ENCODE measurements at regions of chr2 and their contacts with region 1.

Region 1: DNA sequence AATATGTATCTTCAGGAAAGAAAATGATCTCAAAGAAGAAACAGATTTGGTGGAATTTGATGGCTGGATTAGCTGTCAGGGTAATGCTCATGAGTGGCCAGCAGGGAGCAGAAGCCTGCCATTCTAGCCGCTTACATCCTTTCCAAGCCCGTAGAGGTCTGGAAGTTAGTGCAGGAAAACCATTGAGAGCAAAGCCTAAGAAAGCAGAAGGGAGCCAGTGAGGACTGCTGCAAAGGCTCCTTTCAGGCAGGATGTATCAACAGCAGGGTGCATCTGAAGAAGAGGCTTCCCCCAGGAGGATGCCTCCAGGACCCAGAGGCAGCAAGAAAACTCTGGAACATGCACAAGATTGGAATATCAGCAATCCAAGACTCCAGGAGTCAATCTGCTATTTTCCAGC is 22.9 kb upstream of the LBH start:
- DNase-seq: peak; percentile 46 to 75
- ATAC-seq: peak; percentile 75 to 95 (median 92)
- H3K4me3 ChIP-seq: no peak overlapping the region
- H3K27ac ChIP-seq: peak overlapping the region in 3 of 10 donors; percentile 4 to 45 (median 10)
- H3K4me1 ChIP-seq: peaks cover 2 to 20% (median 8%) of the 10 kb centered on the region in 9 donors
- H3K27me3 ChIP-seq: no peaks in the 10 kb centered on the region
- CTCF ChIP-seq: peak; percentile 83 to 95 (median 91)

Region 2: GRCh38 chr2:30139131-30139870 is 69.2 kb before region 1 on chr2:
- intact Hi-C with region 1: no loop called
- DNase-seq: no peak
- ATAC-seq: no peak
- H3K4me3 ChIP-seq: no peak overlapping the region
- H3K27ac ChIP-seq: no peak overlapping the region
- H3K4me1 ChIP-seq: no peaks in the 10 kb centered on the region
- H3K27me3 ChIP-seq: peaks cover 0 to 11% (median 0%) of the 10 kb centered on the region in 7 donors
- CTCF ChIP-seq: no peak

Region 3: GRCh38 chr2:30165050-30165520 is 43.4 kb before region 1 on chr2:
- intact Hi-C with region 1: loop called in 5 of 10 experiments (anchors 5 kb)
- DNase-seq: peak in 1 of 2 donors; percentile 73
- ATAC-seq: peak; percentile 73 to 92 (median 85)
- H3K4me3 ChIP-seq: no peak overlapping the region
- H3K27ac ChIP-seq: no peak overlapping the region
- H3K4me1 ChIP-seq: peaks cover 0 to 29% (median 16%) of the 10 kb centered on the region in 9 donors
- H3K27me3 ChIP-seq: no peaks in the 10 kb centered on the region
- CTCF ChIP-seq: peak; percentile 67 to 95 (median 89)

Region 4: GRCh38 chr2:30172627-30173026 is 35.8 kb before region 1 on chr2:
- intact Hi-C with region 1: loop called in 5 of 10 experiments (anchors 5 kb)
- DNase-seq: no peak
- ATAC-seq: no peak
- H3K4me3 ChIP-seq: no peak overlapping the region
- H3K27ac ChIP-seq: no peak overlapping the region
- H3K4me1 ChIP-seq: peaks cover 0 to 6% (median 0%) of the 10 kb centered on the region in 9 donors
- H3K27me3 ChIP-seq: no peaks in the 10 kb centered on the region
- CTCF ChIP-seq: no peak

Region 5: DNA sequence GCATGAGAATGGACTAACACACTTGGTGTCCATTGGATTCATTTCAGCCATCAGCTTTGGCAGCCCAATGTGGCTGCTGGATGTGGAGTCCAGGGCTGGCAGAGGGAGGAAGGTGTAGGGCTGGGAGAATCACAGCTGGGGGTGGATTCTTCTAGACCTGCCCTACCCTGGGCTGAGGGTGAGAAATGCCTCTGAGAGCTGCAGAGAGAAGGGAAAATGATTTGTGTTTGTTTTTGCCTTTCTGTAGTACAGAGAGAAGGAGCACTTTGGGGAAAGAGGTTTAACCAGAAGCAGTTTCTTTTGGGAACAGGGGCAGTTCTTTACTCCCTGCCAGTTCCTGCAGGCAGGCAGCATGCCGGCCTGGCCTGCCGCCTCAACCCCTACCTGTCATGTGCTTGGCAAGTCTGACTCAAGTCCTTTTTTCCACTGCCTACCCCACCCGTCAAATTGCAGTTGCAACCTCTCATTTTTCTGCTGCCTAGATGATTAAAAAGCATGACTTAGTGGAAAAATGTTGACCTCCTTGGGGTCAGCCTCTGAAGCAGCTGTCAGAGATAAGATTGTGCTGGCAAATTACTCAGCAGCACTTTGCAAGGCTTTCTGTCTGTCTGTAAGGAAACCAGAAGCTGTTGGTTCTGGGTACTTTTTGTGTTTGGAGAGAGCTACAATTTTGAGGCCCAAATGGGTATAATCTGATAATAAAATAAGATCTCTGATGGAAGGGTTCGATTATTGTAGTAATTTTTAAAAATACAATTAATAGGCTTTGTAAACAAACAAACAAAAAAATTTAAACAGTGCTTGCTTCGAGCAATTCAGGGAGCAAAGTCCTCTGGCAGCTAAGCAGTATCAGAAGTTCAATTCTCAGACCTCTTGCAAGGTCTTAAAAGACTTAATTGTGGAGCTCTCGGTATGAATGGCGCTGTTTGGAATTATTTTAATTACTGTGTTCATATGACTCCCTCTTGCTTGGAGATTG is 44.6 kb after region 1 on chr2:
- intact Hi-C with region 1: no loop called
- DNase-seq: peak; percentile 62 to 64
- ATAC-seq: peak; percentile 69 to 88 (median 76)
- H3K4me3 ChIP-seq: peak overlapping the region in 1 of 10 donors; percentile 21
- H3K27ac ChIP-seq: peak overlapping the region; percentile 35 to 87 (median 74)
- H3K4me1 ChIP-seq: peaks cover 25 to 98% (median 88%) of the 10 kb centered on the region in 9 donors
- H3K27me3 ChIP-seq: no peaks in the 10 kb centered on the region
- CTCF ChIP-seq: no peak

Region 6: DNA sequence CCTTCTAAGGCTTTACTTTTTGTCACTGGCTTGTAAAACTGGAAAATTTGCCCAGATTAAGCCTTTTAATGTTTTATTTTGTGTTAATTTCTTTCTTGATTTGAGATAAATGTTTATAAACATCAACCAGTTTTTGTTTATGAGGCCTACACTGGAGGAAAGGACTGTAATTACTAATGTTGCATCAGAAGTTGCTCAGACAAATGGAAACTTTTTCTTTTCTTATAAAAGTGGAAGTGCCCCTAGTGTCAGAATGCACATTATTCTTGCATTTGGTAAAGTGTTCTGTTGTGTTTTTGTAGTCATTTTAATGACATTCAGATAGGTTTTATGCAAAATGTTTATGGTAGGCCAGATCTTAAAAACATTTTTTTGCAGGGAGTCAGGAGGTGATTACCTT is 263.9 kb after region 1 on chr2:
- intact Hi-C with region 1: loop called in 4 of 10 experiments (anchors 5 to 10 kb)
- DNase-seq: no peak
- ATAC-seq: no peak
- H3K4me3 ChIP-seq: no peak overlapping the region
- H3K27ac ChIP-seq: peak overlapping the region in 3 of 10 donors; percentile 7 to 36 (median 17)
- H3K4me1 ChIP-seq: peaks cover 0 to 28% (median 13%) of the 10 kb centered on the region in 9 donors
- H3K27me3 ChIP-seq: no peaks in the 10 kb centered on the region
- CTCF ChIP-seq: no peak

Region 7: GRCh38 chr2:30691948-30692828 is 483.7 kb after region 1 on chr2:
- intact Hi-C with region 1: no loop called
- DNase-seq: no peak
- ATAC-seq: peak; percentile 35 to 76 (median 63)
- H3K4me3 ChIP-seq: no peak overlapping the region
- H3K27ac ChIP-seq: peak overlapping the region in 6 of 10 donors; percentile 16 to 76 (median 53)
- H3K4me1 ChIP-seq: peaks cover 5 to 48% (median 27%) of the 10 kb centered on the region in 9 donors
- H3K27me3 ChIP-seq: no peaks in the 10 kb centered on the region
- CTCF ChIP-seq: peak in 8 of 9 donors; percentile 19 to 63 (median 38)

Region 8: DNA sequence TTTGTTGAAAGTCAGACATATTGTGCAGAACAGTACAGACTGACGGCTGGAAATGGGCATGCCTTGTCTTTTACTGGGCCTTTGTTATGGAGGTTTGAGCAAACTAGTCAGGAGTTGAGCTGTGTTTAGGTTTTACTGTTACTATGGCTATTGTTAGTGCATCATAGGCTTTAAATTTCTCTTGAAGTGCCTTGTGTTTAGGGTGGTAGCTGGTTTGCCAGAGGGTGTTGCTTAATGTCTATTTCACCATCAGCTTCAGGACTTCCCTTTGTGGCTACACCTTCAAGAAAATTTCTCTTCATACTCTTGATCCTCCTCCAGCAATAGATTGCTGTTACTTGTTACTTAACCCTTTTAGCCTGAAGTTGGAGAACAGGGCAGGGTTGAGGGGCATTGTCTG is 494.2 kb after region 1 on chr2:
- intact Hi-C with region 1: loop called (anchors 1 to 5 kb)
- DNase-seq: no peak
- ATAC-seq: no peak
- H3K4me3 ChIP-seq: no peak overlapping the region
- H3K27ac ChIP-seq: no peak overlapping the region
- H3K4me1 ChIP-seq: peaks cover 4 to 29% (median 15%) of the 10 kb centered on the region in 9 donors
- H3K27me3 ChIP-seq: no peaks in the 10 kb centered on the region
- CTCF ChIP-seq: no peak